ENCODE measurements at regions of chr5 and their contacts with region 1.

Region 1: GRCh38 chr5:178732281-178732680 is 1.8 kb upstream of the ZNF354A start:
- DNase-seq: no peak
- ATAC-seq: no peak
- H3K4me3 ChIP-seq: no peak overlapping the region
- H3K27ac ChIP-seq: no peak overlapping the region
- H3K4me1 ChIP-seq: peaks cover 0 to 15% (median 3%) of the 10 kb centered on the region in 12 donors
- H3K27me3 ChIP-seq: no peaks in the 10 kb centered on the region
- CTCF ChIP-seq: no peak
- POLR2A ChIP-seq: no peak

Region 2: GRCh38 chr5:178287791-178288105 is 444.5 kb before region 1 on chr5:
- intact Hi-C with region 1: no loop called
- DNase-seq: peak in 2 of 5 donors; percentile 46 to 64
- ATAC-seq: peak; percentile 31 to 64 (median 40)
- H3K4me3 ChIP-seq: no peak overlapping the region
- H3K27ac ChIP-seq: no peak overlapping the region
- H3K4me1 ChIP-seq: peaks cover 0 to 11% (median 1%) of the 10 kb centered on the region in 12 donors
- H3K27me3 ChIP-seq: peaks cover 0 to 21% (median 0%) of the 10 kb centered on the region in 9 donors
- CTCF ChIP-seq: no peak
- POLR2A ChIP-seq: no peak

Region 3: DNA sequence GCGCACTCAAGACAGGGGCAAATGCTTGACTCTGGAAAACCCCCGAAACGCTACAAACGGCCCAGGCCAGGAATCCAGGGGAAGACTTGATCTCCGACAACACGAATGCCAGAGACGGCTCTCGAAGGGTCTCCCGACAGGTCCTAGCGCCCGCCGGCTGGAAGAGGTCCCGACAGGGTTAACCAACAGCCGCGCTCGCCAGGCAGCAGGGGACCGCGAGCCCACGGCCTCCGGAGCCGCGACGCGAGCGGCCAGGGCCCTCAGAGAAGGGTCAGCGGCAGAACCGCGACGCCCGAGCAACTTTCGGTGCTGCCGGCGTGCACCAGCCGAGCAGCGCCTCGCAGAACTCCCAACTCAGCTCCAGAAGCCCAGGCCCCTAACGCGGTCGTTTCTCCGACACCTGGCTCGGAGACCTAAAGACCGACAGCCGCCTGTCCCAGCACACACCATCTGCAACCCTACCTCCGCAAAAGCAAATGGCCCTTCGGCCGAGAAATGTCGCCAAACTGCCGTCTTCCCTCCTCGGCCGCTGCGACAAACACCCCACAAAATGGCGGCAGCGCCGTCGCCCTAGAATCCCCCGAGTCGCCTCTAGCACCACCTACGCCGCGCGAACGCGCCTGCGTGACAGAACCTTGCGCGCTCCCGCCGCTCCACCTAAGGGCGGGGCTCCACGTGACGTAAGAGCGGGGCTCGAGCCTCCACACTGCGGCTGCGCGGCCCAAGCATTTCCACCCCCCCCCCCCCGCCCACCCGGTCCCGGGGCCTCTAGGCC is 105.6 kb before region 1 on chr5 and contains the start of gene CLK4:
- intact Hi-C with region 1: loop called in 6 of 10 experiments (anchors 2 to 10 kb)
- DNase-seq: peak; percentile 96 to 99 (median 97)
- ATAC-seq: peak; percentile 95 to 98 (median 97)
- H3K4me3 ChIP-seq: peak within 1 kb of the TSS; percentile 58 to 98 (median 84)
- H3K27ac ChIP-seq: peak within 1 kb of the TSS; percentile 87 to 99 (median 98)
- H3K4me1 ChIP-seq: peaks cover 12 to 41% (median 33%) of the 10 kb centered on the region in 12 donors
- H3K27me3 ChIP-seq: no peaks in the 10 kb centered on the region
- CTCF ChIP-seq: no peak
- POLR2A ChIP-seq: peak in 1 of 2 donors; percentile 79
- total RNA-seq, gene CLK4: 9.9 to 24.0 (median 16.3) TPM

Region 4: GRCh38 chr5:178818094-178818493 is 85.8 kb after region 1 on chr5:
- intact Hi-C with region 1: no loop called
- DNase-seq: no peak
- ATAC-seq: no peak
- H3K4me3 ChIP-seq: no peak overlapping the region
- H3K27ac ChIP-seq: no peak overlapping the region
- H3K4me1 ChIP-seq: no peaks in the 10 kb centered on the region
- H3K27me3 ChIP-seq: peaks cover 0 to 6% (median 0%) of the 10 kb centered on the region in 9 donors
- CTCF ChIP-seq: no peak
- POLR2A ChIP-seq: no peak

Region 5: DNA sequence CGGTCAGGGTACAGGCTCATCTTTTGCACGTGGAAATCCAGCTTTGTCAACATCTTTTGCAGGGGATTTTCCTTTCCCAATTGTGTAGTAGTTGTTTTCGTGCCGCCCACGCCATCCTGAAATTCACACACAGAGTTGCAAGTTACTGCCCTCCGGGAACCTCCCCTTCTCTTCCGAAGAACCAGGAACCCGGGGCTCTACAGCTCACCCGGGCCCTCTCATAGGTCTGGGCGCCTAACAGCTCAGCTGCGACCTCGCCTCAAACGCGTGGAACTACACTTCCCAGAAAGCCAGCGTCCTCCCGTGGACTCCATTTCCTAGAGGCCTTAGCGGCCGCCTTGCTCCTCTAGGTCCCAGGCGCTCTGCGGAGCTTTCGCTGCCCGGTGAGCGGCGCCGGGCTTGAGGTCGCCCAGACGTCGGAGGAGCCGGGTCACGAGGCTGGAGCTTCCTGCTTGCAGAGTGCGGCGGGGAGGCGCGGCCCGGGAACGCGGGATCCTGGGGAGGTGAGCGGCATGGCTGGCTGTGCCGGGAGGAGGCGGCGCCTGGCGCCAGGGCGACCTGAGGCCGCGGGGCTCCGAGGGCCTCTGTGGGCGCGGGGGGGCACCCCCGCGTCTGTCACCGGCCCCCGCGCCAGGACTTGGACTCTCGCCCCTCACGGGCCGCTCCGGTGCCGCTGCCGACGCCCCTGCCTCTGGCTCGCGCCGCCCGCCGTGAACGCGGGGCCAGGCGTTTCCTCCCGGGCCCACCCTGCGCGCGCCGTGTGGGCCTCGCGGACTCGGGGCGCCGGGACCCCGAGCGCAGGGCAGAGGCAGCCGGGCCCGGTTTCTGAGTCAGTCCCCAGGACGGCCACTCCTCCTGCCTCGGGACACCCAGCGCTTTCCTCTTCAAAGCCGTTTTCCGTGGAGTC is 127.6 kb after region 1 on chr5 and contains the start of gene ZNF354B:
- intact Hi-C with region 1: loop called in 9 of 10 experiments (anchors 1 to 10 kb)
- DNase-seq: peak; percentile 89 to 94 (median 93)
- ATAC-seq: peak; percentile 95 to 99 (median 98)
- H3K4me3 ChIP-seq: peak within 1 kb of the TSS; percentile 68 to 96 (median 86)
- H3K27ac ChIP-seq: peak within 1 kb of the TSS; percentile 45 to 93 (median 85)
- H3K4me1 ChIP-seq: peaks cover 0 to 25% (median 12%) of the 10 kb centered on the region in 12 donors
- H3K27me3 ChIP-seq: no peaks in the 10 kb centered on the region
- CTCF ChIP-seq: peak in 6 of 12 donors; percentile 13 to 38 (median 34)
- POLR2A ChIP-seq: peak; percentile 42 to 72
- total RNA-seq, gene ZNF354B: 5.2 to 11.9 (median 7.6) TPM

Region 6: GRCh38 chr5:179023528-179024430 is 291.5 kb after region 1 on chr5 and contains the start of gene ZNF879:
- intact Hi-C with region 1: loop called in 1 of 10 experiments (anchors 5 kb)
- DNase-seq: peak; percentile 95 to 97 (median 96)
- ATAC-seq: peak; percentile 95 to 99 (median 99)
- H3K4me3 ChIP-seq: peak within 1 kb of the TSS; percentile 38 to 99 (median 79)
- H3K27ac ChIP-seq: peak within 1 kb of the TSS; percentile 53 to 96 (median 87)
- H3K4me1 ChIP-seq: peaks cover 0 to 18% (median 10%) of the 10 kb centered on the region in 12 donors
- H3K27me3 ChIP-seq: no peaks in the 10 kb centered on the region
- CTCF ChIP-seq: no peak
- POLR2A ChIP-seq: peak in 1 of 2 donors; percentile 59
- total RNA-seq, gene ZNF879: 2.8 to 4.5 (median 3.3) TPM

Region 7: DNA sequence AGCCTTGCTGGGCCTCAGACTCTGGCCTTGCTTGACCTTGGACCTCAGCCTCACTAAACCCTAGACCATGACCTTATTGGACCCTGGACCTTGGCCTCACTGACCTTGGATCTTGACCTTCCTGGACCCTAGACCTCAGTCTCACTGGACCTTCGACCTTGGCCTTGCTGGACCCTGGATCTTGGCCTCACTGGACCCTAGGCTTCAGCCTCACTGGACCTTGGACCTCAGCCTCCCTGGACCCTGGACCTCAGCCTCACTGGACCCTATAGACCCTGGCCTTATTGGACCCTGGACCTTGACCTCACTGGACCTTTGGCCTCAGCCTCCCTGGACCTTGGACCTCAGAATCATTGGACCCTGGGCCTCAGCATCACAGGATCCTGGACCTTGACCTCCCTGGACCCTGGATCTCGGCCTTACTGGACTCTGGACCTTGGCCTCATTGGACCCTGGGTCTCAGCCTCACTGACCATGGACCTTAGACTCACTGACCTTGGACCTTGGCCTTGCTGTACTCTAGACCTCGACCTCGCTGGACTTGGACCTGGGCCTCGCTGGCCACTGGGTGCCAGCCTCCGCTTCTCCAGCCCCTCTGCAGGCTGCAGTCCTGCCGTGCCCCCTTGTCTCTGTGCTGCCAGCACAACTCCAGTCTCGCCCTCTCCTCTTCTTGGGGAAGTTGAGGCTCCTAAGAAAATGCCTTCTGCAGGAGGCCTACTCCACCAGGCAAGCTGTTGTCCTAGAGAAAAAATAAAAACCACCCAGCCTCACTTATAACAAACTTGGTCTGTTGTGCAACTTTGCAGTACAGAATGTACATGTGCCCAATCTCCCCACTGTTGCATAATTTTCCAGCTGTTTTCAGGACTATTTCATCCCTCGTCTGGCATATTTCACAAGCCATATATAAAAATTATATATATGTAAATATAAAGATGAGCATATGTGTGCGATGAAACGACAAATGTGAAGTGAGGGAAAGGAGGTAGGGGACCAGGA is 624.0 kb after region 1 on chr5:
- intact Hi-C with region 1: no loop called
- DNase-seq: peak in 1 of 5 donors; percentile 16
- ATAC-seq: peak in 2 of 4 donors; percentile 53 to 84
- H3K4me3 ChIP-seq: no peak overlapping the region
- H3K27ac ChIP-seq: peak overlapping the region in 4 of 12 donors; percentile 24 to 45 (median 34)
- H3K4me1 ChIP-seq: peaks cover 0 to 36% (median 0%) of the 10 kb centered on the region in 12 donors
- H3K27me3 ChIP-seq: no peaks in the 10 kb centered on the region
- CTCF ChIP-seq: no peak
- POLR2A ChIP-seq: no peak

Region 8: GRCh38 chr5:179495906-179496455 is 763.7 kb after region 1 on chr5:
- intact Hi-C with region 1: loop called in 3 of 10 experiments (anchors 5 to 10 kb)
- DNase-seq: no peak
- ATAC-seq: no peak
- H3K4me3 ChIP-seq: no peak overlapping the region
- H3K27ac ChIP-seq: no peak overlapping the region
- H3K4me1 ChIP-seq: no peaks in the 10 kb centered on the region
- H3K27me3 ChIP-seq: peaks cover 0 to 11% (median 0%) of the 10 kb centered on the region in 9 donors
- CTCF ChIP-seq: no peak
- POLR2A ChIP-seq: no peak

Measured in heart left ventricle (tissue), 16 donors.